AG04450 (cell line): ENCODE measurements at regions of chr7 and their contacts with region 1.

Region 1: DNA sequence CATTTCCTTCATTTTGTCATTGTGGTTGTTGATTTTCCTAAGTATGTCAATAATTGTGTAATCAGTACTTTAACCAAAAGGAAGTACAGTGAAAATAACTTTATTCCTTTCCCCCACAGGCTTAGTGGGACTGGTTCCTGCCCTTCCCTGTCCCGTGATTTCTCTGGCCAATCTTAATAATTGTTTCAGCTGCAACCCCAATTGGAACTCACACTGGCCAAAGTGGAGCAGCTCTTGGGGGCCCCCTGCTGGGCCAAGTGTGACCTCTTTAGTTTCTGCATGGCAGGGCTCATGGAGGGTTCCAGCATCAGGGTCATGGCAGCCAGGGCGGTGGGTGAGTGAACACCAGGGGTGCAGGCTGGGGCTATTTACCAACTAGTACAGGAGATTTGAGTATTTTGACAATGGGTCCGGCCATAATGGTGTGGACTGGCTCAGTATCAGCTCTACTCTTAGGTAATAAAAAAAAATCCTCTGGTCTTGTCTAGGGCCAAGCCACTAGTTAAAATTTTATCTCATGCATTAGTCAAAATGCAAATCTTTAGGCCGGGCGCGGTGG is 31.7 kb downstream of the CYCS start:
- DNase-seq: peak; percentile 30
- H3K4me3 ChIP-seq: no peak overlapping the region
- H3K27ac ChIP-seq: no peak overlapping the region
- H3K27me3 ChIP-seq: no peaks in the 10 kb centered on the region
- CTCF ChIP-seq: peak; percentile 92

Region 2: DNA sequence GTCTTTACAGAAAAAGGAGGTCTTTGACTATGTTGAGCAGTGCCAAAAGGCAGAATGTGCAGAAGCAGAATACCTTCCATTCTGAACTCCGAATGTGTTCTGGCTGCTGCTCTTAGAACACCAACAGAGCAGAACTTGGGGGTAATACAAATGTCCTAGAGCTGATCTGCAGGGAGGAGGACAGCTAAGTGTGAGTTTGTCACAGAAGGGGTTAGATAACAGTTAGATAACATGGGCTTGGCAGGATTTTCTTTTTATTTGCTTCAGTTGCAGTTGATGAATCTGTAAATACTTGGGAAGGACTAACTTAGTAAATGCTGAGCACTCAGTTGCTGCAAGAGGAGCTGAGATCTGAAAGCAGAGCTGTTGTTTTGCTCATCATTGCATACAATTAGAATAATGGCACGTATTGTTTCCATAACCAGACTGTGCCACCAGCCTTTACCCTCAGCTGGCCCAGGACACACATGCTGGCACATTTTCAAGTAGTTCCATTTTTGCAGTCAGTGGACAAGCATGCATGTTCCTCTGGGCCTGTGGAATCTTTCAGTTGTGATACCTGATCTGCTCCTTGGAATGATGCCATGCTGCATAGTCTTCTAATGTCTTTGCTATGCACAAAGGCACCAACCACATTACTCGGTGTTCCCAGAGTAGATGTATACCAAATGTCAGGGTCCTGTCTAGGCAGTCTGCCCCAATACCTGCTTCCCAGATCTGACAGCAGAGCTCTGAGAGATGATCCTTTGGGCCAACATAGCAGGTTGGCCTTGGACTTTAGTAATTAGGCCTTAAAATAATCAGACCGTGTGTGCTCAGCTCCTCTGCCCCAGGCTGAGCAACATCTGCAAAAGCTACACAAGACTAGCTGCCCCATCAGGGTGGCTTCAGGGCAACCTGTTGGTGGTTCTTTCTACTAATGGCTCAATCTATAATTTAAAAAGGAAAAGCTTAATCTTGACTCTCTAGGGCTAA is 391.8 kb before region 1 on chr7:
- CTCF ChIA-PET with region 1: interaction called, 15 read pairs
- POLR2A ChIA-PET with region 1: no interaction called
- DNase-seq: peak; percentile 92
- H3K4me3 ChIP-seq: no peak overlapping the region
- H3K27ac ChIP-seq: peak overlapping the region; percentile 66
- H3K27me3 ChIP-seq: no peaks in the 10 kb centered on the region
- CTCF ChIP-seq: no peak

Region 3: GRCh38 chr7:24800667-24801066 is 292.7 kb before region 1 on chr7:
- CTCF ChIA-PET with region 1: interaction called, 278 read pairs
- POLR2A ChIA-PET with region 1: no interaction called
- DNase-seq: no peak
- H3K4me3 ChIP-seq: no peak overlapping the region
- H3K27ac ChIP-seq: no peak overlapping the region
- H3K27me3 ChIP-seq: no peaks in the 10 kb centered on the region
- CTCF ChIP-seq: no peak

Region 4: GRCh38 chr7:24894429-24895221 is 198.7 kb before region 1 on chr7:
- CTCF ChIA-PET with region 1: interaction called, 25 read pairs
- POLR2A ChIA-PET with region 1: interaction called, 3 read pairs
- DNase-seq: no peak
- H3K4me3 ChIP-seq: no peak overlapping the region
- H3K27ac ChIP-seq: no peak overlapping the region
- H3K27me3 ChIP-seq: no peaks in the 10 kb centered on the region
- CTCF ChIP-seq: peak; percentile 60

Region 5: GRCh38 chr7:25069900-25070443 is 23.4 kb before region 1 on chr7:
- CTCF ChIA-PET with region 1: interaction called, 20 read pairs
- POLR2A ChIA-PET with region 1: no interaction called
- DNase-seq: peak; percentile 56
- H3K4me3 ChIP-seq: no peak overlapping the region
- H3K27ac ChIP-seq: no peak overlapping the region
- H3K27me3 ChIP-seq: no peaks in the 10 kb centered on the region
- CTCF ChIP-seq: peak; percentile 87

Region 6: DNA sequence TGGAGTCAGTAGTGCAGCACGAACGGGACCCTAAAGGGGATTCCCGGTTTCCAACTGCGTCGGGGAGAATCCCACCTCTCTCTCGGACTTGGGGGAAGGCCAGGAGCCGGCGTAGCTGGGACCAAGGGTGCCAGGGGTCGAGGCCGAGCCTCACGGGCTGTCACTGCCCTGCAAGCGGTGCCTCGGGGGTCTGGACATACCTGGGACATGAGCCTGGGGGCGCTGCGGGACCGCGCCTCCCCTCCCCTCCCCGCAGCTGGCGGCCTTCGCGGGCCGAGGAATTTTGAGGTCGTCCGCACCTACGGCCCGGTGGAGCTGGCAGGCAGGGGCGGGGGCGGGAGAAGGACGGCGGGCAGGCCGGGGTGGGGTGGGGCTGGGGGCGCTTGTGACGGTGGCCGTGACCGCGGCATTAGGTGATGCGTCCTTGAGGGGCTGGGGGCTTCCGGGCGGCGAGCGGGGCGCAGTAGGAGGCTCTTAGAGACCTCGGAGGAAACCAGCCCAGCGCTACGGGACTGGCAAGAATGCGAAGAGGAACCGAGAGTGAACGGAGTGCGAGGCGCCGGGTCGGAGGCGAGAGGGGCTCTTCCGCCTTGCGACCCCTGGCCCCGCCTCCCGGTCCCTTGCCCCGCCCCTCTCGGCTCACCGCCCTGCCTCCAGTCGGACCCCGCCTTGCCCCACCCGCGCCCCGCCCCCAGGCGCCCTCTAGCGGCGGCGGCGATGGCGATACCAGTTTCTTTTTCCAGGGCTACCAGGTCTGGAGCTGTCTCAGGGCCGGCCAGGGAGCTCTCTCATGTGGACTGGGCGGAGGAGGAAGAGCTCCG is 86.6 kb after region 1 on chr7:
- CTCF ChIA-PET with region 1: no interaction called
- POLR2A ChIA-PET with region 1: no interaction called
- DNase-seq: peak; percentile 49
- H3K4me3 ChIP-seq: peak overlapping the region; percentile 86
- H3K27ac ChIP-seq: peak overlapping the region; percentile 21
- H3K27me3 ChIP-seq: no peaks in the 10 kb centered on the region
- CTCF ChIP-seq: peak; percentile 60